ENCODE measurements at regions of chr16 and their contacts with region 1.

Region 1: GRCh38 chr16:11819798-11820197 is 22.7 kb upstream of the ZC3H7A start:
- DNase-seq: no peak
- H3K4me3 ChIP-seq: no peak overlapping the region
- H3K27ac ChIP-seq: no peak overlapping the region
- H3K4me1 ChIP-seq: peaks cover 11% of the 10 kb centered on the region in 2 donors
- H3K27me3 ChIP-seq: no peaks in the 10 kb centered on the region
- CTCF ChIP-seq: no peak
- POLR2A ChIP-seq: no peak

Region 2: GRCh38 chr16:11407047-11407982 is 412.5 kb before region 1 on chr16:
- intact Hi-C with region 1: loop called in 1 of 2 experiments (anchors 10 kb)
- DNase-seq: peak; percentile 55 to 90 (median 72)
- H3K4me3 ChIP-seq: no peak overlapping the region
- H3K27ac ChIP-seq: no peak overlapping the region
- H3K4me1 ChIP-seq: peaks cover 0 to 5% of the 10 kb centered on the region in 2 donors
- H3K27me3 ChIP-seq: no peaks in the 10 kb centered on the region
- CTCF ChIP-seq: peak; percentile 66 to 86 (median 80)
- POLR2A ChIP-seq: no peak

Region 3: DNA sequence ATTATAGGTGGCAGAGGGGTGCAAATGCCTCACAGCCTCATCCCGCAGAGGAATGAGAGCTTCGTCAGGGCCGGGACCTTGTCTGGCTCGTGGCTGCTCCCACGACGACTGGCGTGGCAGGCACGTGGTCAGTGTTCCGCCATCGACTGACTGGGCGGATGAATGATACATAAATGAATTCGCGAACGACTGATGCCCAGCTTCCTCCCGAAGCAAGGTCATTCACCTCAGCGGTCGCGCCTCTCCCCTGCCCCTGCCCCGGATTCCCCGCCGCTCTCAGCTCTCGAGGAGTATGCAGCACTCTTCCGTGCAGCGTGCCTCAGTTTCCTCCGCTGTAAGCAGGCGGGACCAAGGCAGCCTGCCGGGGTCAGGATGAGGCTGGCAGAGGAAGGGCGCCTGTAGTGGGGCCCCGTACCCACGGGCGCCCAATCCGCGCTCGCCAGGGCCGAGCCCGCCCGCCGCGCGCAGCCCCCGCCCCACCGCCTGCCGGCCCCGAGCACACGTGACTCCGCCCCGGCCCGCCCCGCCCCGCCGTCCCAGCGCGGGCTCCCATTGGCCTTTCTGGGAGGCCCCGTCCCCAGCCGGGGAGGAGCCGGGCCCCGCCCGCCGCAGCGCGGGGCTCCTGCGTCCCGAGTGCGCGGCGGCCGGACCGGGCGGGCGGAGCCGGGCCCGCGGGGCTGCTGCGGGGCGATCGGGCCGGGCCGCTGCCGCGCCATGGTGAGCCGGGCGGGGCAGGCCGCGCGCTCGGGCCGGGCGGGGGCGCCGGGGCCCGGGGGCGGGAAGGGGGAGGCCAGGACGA is 151.8 kb before region 1 on chr16 and contains the start of gene SNN:
- intact Hi-C with region 1: no loop called
- DNase-seq: peak; percentile 85 to 93 (median 89)
- H3K4me3 ChIP-seq: peak within 1 kb of the TSS; percentile 22 to 95 (median 57)
- H3K27ac ChIP-seq: peak within 1 kb of the TSS; percentile 60 to 89 (median 84)
- H3K4me1 ChIP-seq: peaks cover 26 to 37% of the 10 kb centered on the region in 2 donors
- H3K27me3 ChIP-seq: no peaks in the 10 kb centered on the region
- CTCF ChIP-seq: no peak
- POLR2A ChIP-seq: peak; percentile 41 to 59
- total RNA-seq, gene SNN: 29.5 to 94.7 (median 40.9) TPM

Region 4: GRCh38 chr16:11682655-11683096 is 137.1 kb before region 1 on chr16:
- intact Hi-C with region 1: no loop called
- DNase-seq: no peak
- H3K4me3 ChIP-seq: no peak overlapping the region
- H3K27ac ChIP-seq: no peak overlapping the region
- H3K4me1 ChIP-seq: peaks cover 13 to 21% of the 10 kb centered on the region in 2 donors
- H3K27me3 ChIP-seq: no peaks in the 10 kb centered on the region
- CTCF ChIP-seq: no peak
- POLR2A ChIP-seq: no peak

Region 5: DNA sequence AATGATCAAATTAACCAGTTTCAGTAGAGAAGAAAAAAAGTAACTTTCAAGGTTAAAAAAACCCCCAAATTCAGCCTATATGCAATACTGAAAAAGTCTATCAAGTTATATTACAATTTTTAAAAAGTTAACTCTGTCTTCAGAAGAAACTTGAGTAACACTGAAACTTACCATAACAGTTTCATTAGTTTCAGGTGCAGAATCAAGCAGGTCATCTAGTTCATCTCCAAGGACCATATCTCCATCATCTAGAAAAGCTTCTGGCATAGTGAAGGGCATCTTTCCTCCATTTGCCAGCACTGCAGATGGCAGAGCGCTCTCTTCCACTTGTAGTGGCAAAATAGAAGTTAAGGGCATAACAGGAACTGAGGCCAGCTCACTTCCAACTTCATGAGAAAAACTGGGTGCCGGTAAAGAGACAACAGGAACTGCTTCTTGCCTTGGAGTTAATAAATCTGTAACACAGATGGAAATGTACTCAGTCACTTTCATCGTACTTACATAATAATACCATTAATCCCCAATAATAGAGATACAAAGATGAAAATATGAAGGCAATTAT is 45.7 kb before region 1 on chr16:
- intact Hi-C with region 1: no loop called
- DNase-seq: peak in 1 of 7 donors; percentile 3
- H3K4me3 ChIP-seq: no peak overlapping the region
- H3K27ac ChIP-seq: no peak overlapping the region
- H3K4me1 ChIP-seq: no peaks in the 10 kb centered on the region
- H3K27me3 ChIP-seq: no peaks in the 10 kb centered on the region
- CTCF ChIP-seq: no peak
- POLR2A ChIP-seq: no peak

Measured in adrenal gland (tissue), 19 donors.